GM13976 (cell line): ENCODE measurements at regions of chr16 and their contacts with region 1.

Region 1: DNA sequence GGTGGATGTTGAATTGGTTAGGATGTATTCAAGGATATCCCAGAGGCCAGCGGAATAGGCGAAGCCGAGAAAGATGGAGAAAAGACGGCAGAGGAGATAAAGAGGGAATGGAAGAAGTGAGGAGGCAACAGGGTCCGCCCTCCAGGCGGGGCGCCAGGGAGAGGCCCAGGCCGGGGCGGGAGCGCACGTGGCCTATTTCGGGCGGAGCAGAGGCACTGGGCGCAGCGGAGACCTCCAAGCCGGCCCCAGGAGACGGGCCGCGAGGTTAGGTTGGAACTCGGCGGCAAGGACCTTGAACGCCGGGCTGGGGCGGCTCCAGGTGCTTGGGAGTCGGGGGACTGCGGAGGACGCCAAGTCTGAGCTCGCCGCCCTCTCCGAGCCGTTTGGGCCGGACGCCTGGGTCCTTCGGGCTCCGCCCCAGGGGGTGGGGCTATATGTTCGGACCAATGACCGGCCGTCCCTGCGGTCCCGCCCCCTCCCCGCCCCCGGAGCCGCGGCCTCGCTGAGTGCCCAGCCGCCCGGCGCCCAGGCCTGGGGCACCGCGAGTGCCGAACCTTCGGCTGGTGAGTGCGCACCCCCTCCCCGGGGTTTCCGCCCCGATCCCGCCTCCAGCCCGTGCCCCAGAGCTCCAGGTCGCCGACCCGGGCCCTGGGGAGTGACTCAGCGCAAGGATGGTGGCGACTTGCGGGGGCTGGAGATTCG is at the start of gene ZNF771:
- DNase-seq: peak; percentile 95
- CTCF ChIP-seq: no peak

Region 2: GRCh38 chr16:30112197-30113030 is 294.8 kb before region 1 on chr16:
- in situ Hi-C with region 1: loop called (anchors 25 kb)
- DNase-seq: peak; percentile 89
- CTCF ChIP-seq: peak; percentile 76

Region 3: GRCh38 chr16:30183233-30184095 is 223.8 kb before region 1 on chr16 and contains the start of gene CORO1A:
- in situ Hi-C with region 1: loop called (anchors 25 kb)
- DNase-seq: peak; percentile 88
- CTCF ChIP-seq: no peak

Region 4: GRCh38 chr16:30609926-30610839 is 202.9 kb after region 1 on chr16 and contains the start of gene ZNF689:
- in situ Hi-C with region 1: no loop called
- DNase-seq: peak; percentile 97
- CTCF ChIP-seq: no peak

Region 5: GRCh38 chr16:30621765-30622164 is 214.5 kb after region 1 on chr16:
- in situ Hi-C with region 1: no loop called
- DNase-seq: no peak
- CTCF ChIP-seq: no peak

Region 6: DNA sequence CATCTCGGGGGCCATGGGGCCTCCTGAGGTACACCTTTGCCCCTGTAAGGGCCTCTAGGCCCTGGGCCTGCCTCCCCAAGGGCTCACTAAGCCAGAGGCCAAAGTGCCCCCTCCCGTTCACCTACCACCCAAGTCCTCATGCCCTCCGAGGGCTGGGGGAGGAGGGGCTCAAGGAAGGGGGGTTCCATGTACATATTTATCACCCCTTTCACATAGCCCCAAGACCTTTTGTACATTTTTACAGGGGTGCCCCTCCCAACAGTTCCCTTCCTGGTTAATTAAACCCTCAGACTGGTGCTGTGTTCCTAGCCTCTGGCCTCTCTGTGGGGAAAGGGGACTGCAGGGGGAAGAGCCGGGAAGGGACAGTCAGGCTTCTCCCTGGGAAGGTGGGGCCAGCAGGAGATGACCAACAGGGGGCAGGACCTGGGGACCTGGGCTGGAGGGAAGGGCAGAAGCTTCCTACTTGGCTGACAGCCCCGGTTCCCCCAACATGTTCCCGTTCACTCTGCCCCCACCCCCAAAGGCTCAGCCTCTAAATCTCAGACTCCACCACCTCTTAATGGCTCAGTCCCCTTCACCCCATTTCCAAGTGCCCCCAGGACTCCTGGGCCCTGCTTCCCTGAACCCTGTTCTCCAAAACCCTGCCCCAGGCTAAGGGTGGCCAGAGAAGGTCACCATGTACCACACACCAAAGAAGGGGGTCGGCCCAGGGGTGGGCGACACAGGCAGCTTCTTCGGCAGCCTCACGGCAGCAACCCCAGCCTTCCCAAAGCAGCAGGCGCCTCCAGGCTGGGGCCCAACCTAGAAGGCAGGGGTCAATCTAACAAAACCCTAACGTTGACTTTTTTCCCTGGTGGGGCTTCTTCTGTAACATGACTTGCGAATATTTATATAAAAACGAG is 262.9 kb after region 1 on chr16:
- in situ Hi-C with region 1: no loop called
- DNase-seq: no peak
- CTCF ChIP-seq: no peak

Region 7: DNA sequence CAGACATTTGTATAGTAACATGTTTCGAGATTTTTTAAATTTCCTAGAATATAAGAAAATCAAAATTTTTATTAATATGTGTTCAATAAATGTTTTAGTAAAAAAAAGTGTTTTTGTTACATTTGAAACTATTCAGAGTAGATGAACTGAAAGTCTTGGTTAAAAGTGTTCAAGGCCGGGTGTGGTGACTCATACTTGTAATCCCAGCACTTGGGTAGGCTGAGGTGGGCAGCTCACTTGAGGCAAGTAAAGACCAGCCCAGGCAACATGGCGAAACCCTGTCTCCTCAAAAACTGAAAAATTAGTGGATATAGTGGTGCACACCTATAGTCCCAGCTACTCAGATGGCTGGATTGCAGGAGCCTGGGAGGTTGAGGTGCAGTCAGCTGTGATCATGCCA is 324.2 kb after region 1 on chr16:
- in situ Hi-C with region 1: no loop called
- DNase-seq: no peak
- CTCF ChIP-seq: no peak